B cell (primary cell): ENCODE measurements at regions of chr3 and their contacts with region 1.

Region 1: GRCh38 chr3:177109688-177110330 is 87.5 kb downstream of the TBL1XR1 start:
- DNase-seq: peak; percentile 54
- ATAC-seq: peak; percentile 76
- H3K4me3 ChIP-seq: no peak overlapping the region
- H3K4me3 Mint-ChIP-seq: peak overlapping the region; percentile 62
- H3K27ac ChIP-seq: peak overlapping the region in 1 of 2 donors; percentile 60
- H3K27ac Mint-ChIP-seq: peak overlapping the region; percentile 57
- H3K4me1 ChIP-seq: peaks cover 38 to 65% of the 10 kb centered on the region in 2 donors
- H3K4me1 Mint-ChIP-seq: peaks cover 73% of the 10 kb centered on the region
- H3K27me3 ChIP-seq: no peaks in the 10 kb centered on the region
- H3K27me3 Mint-ChIP-seq: no peaks in the 10 kb centered on the region
- CTCF ChIP-seq: no peak

Region 2: DNA sequence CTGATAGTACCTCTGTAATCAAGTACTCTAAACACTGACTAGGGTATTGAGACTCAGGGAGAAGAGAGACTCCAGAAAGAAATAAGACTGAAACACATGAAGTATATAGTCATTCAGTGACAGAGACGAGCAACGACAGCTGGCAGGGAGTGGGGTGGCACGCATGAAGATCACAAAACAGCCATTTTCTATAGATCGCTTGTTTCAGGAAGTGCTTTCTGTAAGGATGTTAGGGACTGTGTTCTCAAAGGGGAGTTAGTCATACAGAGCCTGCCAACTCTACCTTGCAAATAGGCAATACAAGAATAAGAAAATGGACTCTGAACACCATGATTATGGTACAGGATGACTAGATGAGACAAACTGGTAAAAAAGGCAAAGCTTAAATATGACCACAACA is 52.0 kb before region 1 on chr3:
- CTCF ChIA-PET with region 1: interaction called, 3 read pairs
- POLR2A ChIA-PET with region 1: no interaction called
- intact Hi-C with region 1: loop called (anchors 5 kb)
- DNase-seq: peak; percentile 42
- ATAC-seq: peak; percentile 81
- H3K4me3 ChIP-seq: no peak overlapping the region
- H3K4me3 Mint-ChIP-seq: no peak overlapping the region
- H3K27ac ChIP-seq: peak overlapping the region in 1 of 2 donors; percentile 21
- H3K27ac Mint-ChIP-seq: no peak overlapping the region
- H3K4me1 ChIP-seq: peaks cover 6 to 8% of the 10 kb centered on the region in 2 donors
- H3K4me1 Mint-ChIP-seq: peaks cover 19% of the 10 kb centered on the region
- H3K27me3 ChIP-seq: no peaks in the 10 kb centered on the region
- H3K27me3 Mint-ChIP-seq: no peaks in the 10 kb centered on the region
- CTCF ChIP-seq: no peak

Region 3: GRCh38 chr3:177144923-177145780 is 35.3 kb after region 1 on chr3:
- CTCF ChIA-PET with region 1: no interaction called
- POLR2A ChIA-PET with region 1: interaction called, 3 read pairs
- intact Hi-C with region 1: loop called (anchors 5 kb)
- DNase-seq: peak; percentile 71
- ATAC-seq: peak; percentile 70
- H3K4me3 ChIP-seq: peak overlapping the region in 3 of 5 experiments; percentile 16 to 29 (median 18)
- H3K4me3 Mint-ChIP-seq: peak overlapping the region; percentile 68
- H3K27ac ChIP-seq: peak overlapping the region; percentile 75 to 85
- H3K27ac Mint-ChIP-seq: peak overlapping the region; percentile 86
- H3K4me1 ChIP-seq: peaks cover 70 to 72% of the 10 kb centered on the region in 2 donors
- H3K4me1 Mint-ChIP-seq: peaks cover 83% of the 10 kb centered on the region
- H3K27me3 ChIP-seq: no peaks in the 10 kb centered on the region
- H3K27me3 Mint-ChIP-seq: no peaks in the 10 kb centered on the region
- CTCF ChIP-seq: no peak